Activated CD8-positive, alpha-beta memory T cell treated with anti-CD3 and anti-CD28 coated beads, Interleukin-2, amount 10 ng/mL, durations not matched to agents 7 days and 5 days (primary cell): ENCODE measurements at regions of chr11 and their contacts with region 1.

Region 1: GRCh38 chr11:33161120-33162005 is at the start of gene CSTF3:
- DNase-seq: peak; percentile 98
- ATAC-seq: peak; percentile 97
- H3K4me3 Mint-ChIP-seq: peak within 1 kb of the TSS; percentile 99
- H3K27ac Mint-ChIP-seq: peak within 1 kb of the TSS; percentile 99
- H3K4me1 Mint-ChIP-seq: peaks cover 39% of the 10 kb centered on the region
- H3K27me3 Mint-ChIP-seq: no peaks in the 10 kb centered on the region
- total RNA-seq, gene CSTF3: 32.2 to 36.3 TPM

Region 2: GRCh38 chr11:33211580-33211979 is 50.2 kb after region 1 on chr11:
- CTCF ChIA-PET with region 1: no interaction called
- DNase-seq: no peak
- ATAC-seq: no peak
- H3K4me3 Mint-ChIP-seq: no peak overlapping the region
- H3K27ac Mint-ChIP-seq: no peak overlapping the region
- H3K4me1 Mint-ChIP-seq: no peaks in the 10 kb centered on the region
- H3K27me3 Mint-ChIP-seq: peaks cover 3% of the 10 kb centered on the region

Region 3: GRCh38 chr11:33329705-33330329 is 168.5 kb after region 1 on chr11:
- CTCF ChIA-PET with region 1: interaction called, 17 read pairs
- DNase-seq: peak; percentile 53
- ATAC-seq: peak; percentile 33
- H3K4me3 Mint-ChIP-seq: no peak overlapping the region
- H3K27ac Mint-ChIP-seq: no peak overlapping the region
- H3K4me1 Mint-ChIP-seq: no peaks in the 10 kb centered on the region
- H3K27me3 Mint-ChIP-seq: no peaks in the 10 kb centered on the region